ENCODE measurements at regions of chr6 and their contacts with region 1.

Region 1: DNA sequence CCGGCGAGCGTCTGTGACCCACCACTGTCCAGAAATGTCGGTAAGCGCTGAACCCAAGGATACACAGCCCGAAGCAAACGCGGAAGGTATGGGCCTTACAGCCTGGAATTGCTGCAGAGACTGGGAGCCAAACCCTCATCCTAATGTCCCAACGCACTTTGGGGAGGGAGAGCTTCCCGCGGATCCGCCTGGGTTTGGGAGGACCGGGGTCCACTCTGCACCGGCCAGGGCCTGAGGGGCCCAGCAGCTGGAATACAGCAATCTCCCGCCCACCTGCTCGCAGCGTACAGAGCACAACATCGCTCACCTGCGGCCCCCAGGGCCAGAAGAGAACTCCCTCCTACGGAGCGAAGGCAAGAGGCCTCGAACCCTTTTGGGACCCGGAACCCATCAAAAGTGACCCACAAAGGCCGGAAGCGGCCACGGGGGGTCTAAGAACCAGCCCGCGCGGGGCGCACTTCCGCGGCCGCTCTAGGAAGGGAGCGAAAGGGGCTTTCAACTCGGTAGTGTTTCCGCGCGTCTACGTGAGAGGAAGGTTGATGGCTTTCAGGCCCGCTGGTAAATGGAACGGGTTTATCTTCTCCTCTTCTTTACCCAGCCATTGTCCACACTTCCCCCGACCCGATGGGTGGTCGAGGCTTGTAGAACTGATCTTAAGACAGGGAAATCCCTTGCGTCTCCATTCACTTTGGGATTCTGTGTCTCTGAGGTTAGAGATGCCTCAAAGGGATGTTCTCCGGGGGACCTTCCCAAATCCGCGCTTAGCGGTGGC is at the start of gene ZSCAN12:
- DNase-seq: peak; percentile 72 to 81 (median 80)
- H3K4me3 ChIP-seq: peak within 1 kb of the TSS; percentile 81 to 91
- H3K4me3 Mint-ChIP-seq: peak within 1 kb of the TSS; percentile 94 to 96 (median 95)
- H3K27ac ChIP-seq: peak within 1 kb of the TSS; percentile 44
- H3K27ac Mint-ChIP-seq: peak within 1 kb of the TSS; percentile 72 to 94 (median 90)
- H3K4me1 ChIP-seq: peaks cover 43% of the 10 kb centered on the region
- H3K4me1 Mint-ChIP-seq: peaks cover 19 to 59% (median 39%) of the 10 kb centered on the region in 4 donors
- H3K27me3 ChIP-seq: no peaks in the 10 kb centered on the region
- H3K27me3 Mint-ChIP-seq: peaks cover 8 to 11% of the 10 kb centered on the region in 2 donors
- total RNA-seq, gene ZSCAN12: 8.0 to 8.3 TPM

Region 2: GRCh38 chr6:27814660-27815424 is 584.7 kb before region 1 on chr6:
- CTCF ChIA-PET with region 1: no interaction called
- POLR2A ChIA-PET with region 1: no interaction called
- intact Hi-C with region 1: no loop called
- DNase-seq: peak; percentile 87 to 91 (median 90)
- H3K4me3 ChIP-seq: peak overlapping the region; percentile 49 to 51
- H3K4me3 Mint-ChIP-seq: peak overlapping the region; percentile 84 to 97 (median 90)
- H3K27ac ChIP-seq: peak overlapping the region; percentile 63
- H3K27ac Mint-ChIP-seq: peak overlapping the region; percentile 89 to 98 (median 93)
- H3K4me1 ChIP-seq: peaks cover 31% of the 10 kb centered on the region
- H3K4me1 Mint-ChIP-seq: peaks cover 23 to 42% (median 33%) of the 10 kb centered on the region in 4 donors
- H3K27me3 ChIP-seq: no peaks in the 10 kb centered on the region
- H3K27me3 Mint-ChIP-seq: no peaks in the 10 kb centered on the region

Region 3: GRCh38 chr6:27931209-27931608 is 468.3 kb before region 1 on chr6:
- CTCF ChIA-PET with region 1: no interaction called
- POLR2A ChIA-PET with region 1: no interaction called
- intact Hi-C with region 1: no loop called
- DNase-seq: no peak
- H3K4me3 ChIP-seq: no peak overlapping the region
- H3K4me3 Mint-ChIP-seq: no peak overlapping the region
- H3K27ac ChIP-seq: no peak overlapping the region
- H3K27ac Mint-ChIP-seq: no peak overlapping the region
- H3K4me1 ChIP-seq: no peaks in the 10 kb centered on the region
- H3K4me1 Mint-ChIP-seq: no peaks in the 10 kb centered on the region
- H3K27me3 ChIP-seq: no peaks in the 10 kb centered on the region
- H3K27me3 Mint-ChIP-seq: peaks cover 24 to 29% of the 10 kb centered on the region in 2 donors

Region 4: DNA sequence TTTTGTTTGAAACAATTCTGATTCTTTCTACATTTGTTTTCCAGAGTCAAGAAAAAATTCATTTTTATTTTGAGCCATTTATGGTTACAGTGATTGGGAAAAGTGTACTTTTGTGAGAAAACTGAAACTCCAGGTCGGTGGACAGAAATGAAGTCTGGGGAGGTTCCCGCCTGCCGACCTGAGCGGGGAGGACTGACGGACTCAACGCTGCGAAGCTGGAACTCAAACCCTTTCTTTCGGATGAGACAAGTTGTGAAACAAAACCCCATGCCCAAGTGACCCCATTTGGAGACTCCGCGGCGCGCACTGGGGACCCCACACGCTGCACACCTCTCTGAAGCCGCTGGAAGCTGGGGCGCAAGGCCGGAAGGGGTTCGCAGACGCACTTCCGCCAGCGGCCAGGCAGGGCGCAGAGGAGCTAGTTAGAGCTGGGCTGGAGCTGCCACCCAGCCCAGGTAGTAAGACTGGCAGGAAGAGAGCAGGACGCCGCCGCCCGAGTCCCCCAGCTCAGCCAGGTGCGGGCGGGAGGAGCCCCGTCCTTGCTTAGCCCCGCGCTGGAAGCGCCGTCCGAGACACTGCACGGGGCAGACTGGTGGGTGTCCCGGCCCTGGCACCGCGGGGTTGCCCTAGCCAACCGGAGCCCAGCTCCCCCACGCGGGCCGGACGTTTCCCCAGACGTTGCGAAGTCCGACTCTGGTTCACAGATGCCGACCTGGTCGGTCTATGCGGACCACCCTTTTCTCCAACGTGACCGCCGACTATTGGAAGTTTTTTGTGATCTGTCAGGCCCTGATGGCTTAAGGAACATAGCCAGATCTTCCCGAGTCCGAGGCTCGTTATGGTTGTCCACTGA is 294.9 kb before region 1 on chr6:
- CTCF ChIA-PET with region 1: no interaction called
- POLR2A ChIA-PET with region 1: interaction called, 4 read pairs
- intact Hi-C with region 1: loop called (anchors 1 kb)
- DNase-seq: peak; percentile 79 to 83 (median 82)
- H3K4me3 ChIP-seq: peak overlapping the region; percentile 59 to 67
- H3K4me3 Mint-ChIP-seq: peak overlapping the region; percentile 85 to 96 (median 92)
- H3K27ac ChIP-seq: peak overlapping the region; percentile 72
- H3K27ac Mint-ChIP-seq: peak overlapping the region; percentile 80 to 97 (median 93)
- H3K4me1 ChIP-seq: peaks cover 13% of the 10 kb centered on the region
- H3K4me1 Mint-ChIP-seq: peaks cover 3 to 17% (median 11%) of the 10 kb centered on the region in 4 donors
- H3K27me3 ChIP-seq: no peaks in the 10 kb centered on the region
- H3K27me3 Mint-ChIP-seq: peaks cover 3 to 11% of the 10 kb centered on the region in 2 donors

Region 5: DNA sequence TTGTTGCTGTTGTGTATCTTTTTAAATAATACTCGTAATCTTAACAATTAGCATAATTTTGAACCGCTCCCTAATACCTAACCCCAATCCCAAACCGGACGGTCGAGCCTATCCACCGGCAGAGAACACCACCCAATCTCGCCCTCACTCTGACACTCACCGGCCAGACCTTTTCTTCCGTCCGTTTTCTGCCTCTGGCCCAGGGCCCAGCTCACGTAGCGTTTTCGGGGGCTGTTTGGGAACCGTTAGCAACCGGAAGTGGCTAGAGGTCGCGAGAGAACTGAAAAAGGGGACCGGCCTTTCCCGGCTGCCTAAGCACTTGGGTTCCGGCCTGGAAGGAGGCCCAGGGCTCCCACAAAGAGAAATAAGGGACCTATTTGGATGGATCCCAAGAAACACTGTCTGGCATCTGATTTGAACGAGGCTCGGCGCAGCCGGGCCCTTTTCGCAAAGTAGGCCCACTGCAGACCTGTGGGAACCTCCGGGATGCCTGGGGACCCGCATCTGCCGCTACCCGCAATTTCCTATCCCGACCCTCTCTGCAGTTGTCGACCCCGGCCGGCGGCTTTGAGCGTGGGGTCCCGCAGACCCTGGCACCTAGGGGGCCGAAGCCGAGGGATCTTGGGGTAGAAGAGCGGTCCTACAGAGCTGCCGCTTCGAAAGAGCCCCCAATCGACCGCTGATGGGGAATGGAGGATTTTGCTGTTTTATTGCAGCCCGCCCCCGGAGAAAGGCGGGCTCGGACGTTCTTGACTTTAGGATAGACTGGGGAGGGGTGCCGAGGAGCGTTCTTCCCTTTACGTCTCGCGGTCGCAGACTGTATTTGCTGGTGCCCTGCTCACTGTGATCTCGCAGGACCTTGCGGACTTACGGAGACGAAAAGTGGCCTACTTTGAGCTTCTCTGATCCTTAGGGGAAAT is 262.7 kb before region 1 on chr6:
- CTCF ChIA-PET with region 1: no interaction called
- POLR2A ChIA-PET with region 1: interaction called, 10 read pairs
- intact Hi-C with region 1: loop called (anchors 1 kb)
- DNase-seq: peak; percentile 54 to 76 (median 62)
- H3K4me3 ChIP-seq: peak overlapping the region; percentile 64 to 96
- H3K4me3 Mint-ChIP-seq: peak overlapping the region; percentile 92 to 99 (median 94)
- H3K27ac ChIP-seq: peak overlapping the region; percentile 98
- H3K27ac Mint-ChIP-seq: peak overlapping the region; percentile 95 to 100 (median 98)
- H3K4me1 ChIP-seq: peaks cover 51% of the 10 kb centered on the region
- H3K4me1 Mint-ChIP-seq: peaks cover 52 to 88% (median 68%) of the 10 kb centered on the region in 4 donors
- H3K27me3 ChIP-seq: no peaks in the 10 kb centered on the region
- H3K27me3 Mint-ChIP-seq: no peaks in the 10 kb centered on the region

Region 6: GRCh38 chr6:28266962-28267694 is 132.4 kb before region 1 on chr6 and contains the start of gene ZSCAN26:
- CTCF ChIA-PET with region 1: interaction called, 4 read pairs
- POLR2A ChIA-PET with region 1: no interaction called
- intact Hi-C with region 1: loop called (anchors 1 kb)
- DNase-seq: peak; percentile 86 to 90 (median 88)
- H3K4me3 ChIP-seq: peak within 1 kb of the TSS; percentile 90 to 94
- H3K4me3 Mint-ChIP-seq: peak within 1 kb of the TSS in 1 of 8 donors; percentile 12
- H3K27ac ChIP-seq: peak within 1 kb of the TSS; percentile 70
- H3K27ac Mint-ChIP-seq: no peak within 1 kb of the TSS
- H3K4me1 ChIP-seq: peaks cover 18% of the 10 kb centered on the region
- H3K4me1 Mint-ChIP-seq: peaks cover 4 to 15% (median 11%) of the 10 kb centered on the region in 4 donors
- H3K27me3 ChIP-seq: no peaks in the 10 kb centered on the region
- H3K27me3 Mint-ChIP-seq: peaks cover 0 to under 1% of the 10 kb centered on the region in 2 donors
- total RNA-seq, gene ZSCAN26: 23.3 to 26.5 TPM

Region 7: GRCh38 chr6:28424153-28424552 is 24.6 kb after region 1 on chr6:
- CTCF ChIA-PET with region 1: no interaction called
- POLR2A ChIA-PET with region 1: no interaction called
- intact Hi-C with region 1: no loop called
- DNase-seq: no peak
- H3K4me3 ChIP-seq: no peak overlapping the region
- H3K4me3 Mint-ChIP-seq: no peak overlapping the region
- H3K27ac ChIP-seq: no peak overlapping the region
- H3K27ac Mint-ChIP-seq: no peak overlapping the region
- H3K4me1 ChIP-seq: no peaks in the 10 kb centered on the region
- H3K4me1 Mint-ChIP-seq: peaks cover 7 to 8% (median 8%) of the 10 kb centered on the region in 4 donors
- H3K27me3 ChIP-seq: no peaks in the 10 kb centered on the region
- H3K27me3 Mint-ChIP-seq: peaks cover 8 to 19% of the 10 kb centered on the region in 2 donors

Region 8: GRCh38 chr6:28443112-28443773 is 43.7 kb after region 1 on chr6 and contains the start of gene ZSCAN23:
- CTCF ChIA-PET with region 1: no interaction called
- POLR2A ChIA-PET with region 1: interaction called, 5 read pairs
- intact Hi-C with region 1: loop called (anchors 1 kb)
- DNase-seq: peak; percentile 86 to 92 (median 89)
- H3K4me3 ChIP-seq: peak within 1 kb of the TSS; percentile 19 to 53
- H3K4me3 Mint-ChIP-seq: peak within 1 kb of the TSS; percentile 92 to 99 (median 95)
- H3K27ac ChIP-seq: no peak within 1 kb of the TSS
- H3K27ac Mint-ChIP-seq: peak within 1 kb of the TSS; percentile 91 to 97 (median 96)
- H3K4me1 ChIP-seq: peaks cover 15% of the 10 kb centered on the region
- H3K4me1 Mint-ChIP-seq: peaks cover 13 to 25% (median 16%) of the 10 kb centered on the region in 4 donors
- H3K27me3 ChIP-seq: peaks cover 14% of the 10 kb centered on the region
- H3K27me3 Mint-ChIP-seq: peaks cover 30 to 37% of the 10 kb centered on the region in 2 donors
- total RNA-seq, gene ZSCAN23: 1.1 to 1.7 TPM

Region 9: DNA sequence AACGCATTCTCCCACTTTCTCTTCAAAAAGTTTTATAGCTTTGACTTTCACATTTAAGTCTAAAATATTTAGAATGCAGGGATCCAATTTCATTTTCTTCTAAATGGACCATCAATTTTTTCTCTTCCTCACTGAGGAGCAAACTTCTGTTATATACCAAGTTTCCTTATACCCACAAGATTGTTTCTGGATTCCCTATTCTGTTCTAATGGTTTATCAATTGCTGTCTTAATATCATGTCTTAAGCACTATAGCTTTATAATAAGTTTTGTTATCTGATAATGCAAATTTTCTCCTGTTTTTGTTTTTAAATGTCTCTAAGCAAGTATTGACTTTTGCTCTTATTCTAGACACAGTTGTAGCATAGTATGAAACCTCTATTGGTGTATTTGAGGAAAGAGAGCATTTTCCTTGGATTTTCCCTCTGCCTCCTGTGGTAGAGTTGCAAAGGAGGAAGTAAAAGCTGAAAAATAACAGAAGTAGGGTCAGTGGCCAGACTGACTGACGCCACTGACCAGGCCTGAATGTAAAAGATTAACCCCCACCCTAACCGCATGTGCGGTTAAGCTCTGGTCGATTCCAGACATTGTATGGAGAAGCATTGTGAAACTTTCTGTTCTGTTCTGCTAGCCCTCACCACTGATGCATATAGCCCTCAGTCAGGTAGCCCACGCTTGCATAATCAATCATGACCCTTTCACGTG is 166.4 kb after region 1 on chr6:
- CTCF ChIA-PET with region 1: no interaction called
- POLR2A ChIA-PET with region 1: no interaction called
- intact Hi-C with region 1: no loop called
- DNase-seq: no peak
- H3K4me3 ChIP-seq: no peak overlapping the region
- H3K4me3 Mint-ChIP-seq: no peak overlapping the region
- H3K27ac ChIP-seq: no peak overlapping the region
- H3K27ac Mint-ChIP-seq: no peak overlapping the region
- H3K4me1 ChIP-seq: no peaks in the 10 kb centered on the region
- H3K4me1 Mint-ChIP-seq: no peaks in the 10 kb centered on the region
- H3K27me3 ChIP-seq: no peaks in the 10 kb centered on the region
- H3K27me3 Mint-ChIP-seq: peaks cover 32 to 36% of the 10 kb centered on the region in 2 donors

Region 10: DNA sequence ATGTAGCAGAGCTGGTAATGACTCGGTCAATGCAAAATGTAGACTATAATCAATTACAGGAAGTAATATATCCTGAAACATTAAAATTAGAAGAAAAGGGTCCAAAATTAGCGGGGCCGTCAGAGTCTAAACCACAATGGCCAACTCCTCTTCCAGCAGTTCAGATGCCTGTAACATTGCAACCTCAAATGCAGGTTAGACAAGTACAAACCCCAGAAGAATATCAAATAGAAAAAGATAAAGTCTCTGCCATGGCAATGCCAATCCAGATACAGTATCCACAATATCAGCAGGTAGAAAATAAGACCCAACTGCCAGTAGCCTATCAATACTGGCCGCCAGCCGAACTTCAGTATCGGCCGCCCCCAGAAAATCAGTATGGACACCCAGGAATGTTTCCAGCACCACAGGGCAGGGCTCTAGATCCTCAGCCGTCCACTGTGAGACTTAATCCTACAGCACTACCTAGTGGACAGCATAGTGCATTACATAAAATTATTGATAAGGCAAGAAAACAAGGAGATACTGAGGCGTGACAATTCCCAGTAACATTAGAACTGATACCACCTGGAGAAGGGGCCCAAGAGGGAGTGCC is 284.5 kb after region 1 on chr6:
- CTCF ChIA-PET with region 1: no interaction called
- POLR2A ChIA-PET with region 1: no interaction called
- intact Hi-C with region 1: loop called (anchors 5 kb)
- DNase-seq: peak in 4 of 5 donors; percentile 35 to 52 (median 44)
- H3K4me3 ChIP-seq: no peak overlapping the region
- H3K4me3 Mint-ChIP-seq: peak overlapping the region in 5 of 8 donors; percentile 14 to 76 (median 66)
- H3K27ac ChIP-seq: no peak overlapping the region
- H3K27ac Mint-ChIP-seq: peak overlapping the region in 1 of 7 donors; percentile 38
- H3K4me1 ChIP-seq: peaks cover 15% of the 10 kb centered on the region
- H3K4me1 Mint-ChIP-seq: peaks cover 9 to 21% (median 17%) of the 10 kb centered on the region in 4 donors
- H3K27me3 ChIP-seq: peaks cover 16% of the 10 kb centered on the region
- H3K27me3 Mint-ChIP-seq: peaks cover 38 to 49% of the 10 kb centered on the region in 2 donors